Activated CD4-positive, alpha-beta memory T cell treated with anti-CD3 and anti-CD28 coated beads, Interleukin-2, amount 10 ng/mL, durations not matched to agents 7 days and 5 days (primary cell): ENCODE measurements at regions of chr1 and their contacts with region 1.

Region 1: DNA sequence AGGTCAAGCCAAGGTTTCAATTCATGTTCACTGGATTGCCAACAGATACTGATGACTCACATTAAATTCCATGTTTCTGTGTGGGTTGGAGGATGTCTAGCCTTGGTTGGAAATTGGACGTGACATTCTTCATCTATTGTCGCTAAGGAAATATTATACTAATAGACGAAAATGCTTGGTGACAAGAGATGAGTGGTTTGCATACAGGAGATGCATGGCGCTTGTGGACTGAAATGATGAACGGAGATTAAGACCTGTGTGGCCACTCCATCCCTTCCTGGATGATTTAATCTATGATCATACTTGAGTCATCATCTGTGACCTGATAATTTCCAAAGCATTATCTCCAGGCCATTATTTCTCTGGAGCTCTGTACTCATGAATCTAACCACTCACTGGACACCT is 97.0 kb upstream of the CD34 start:
- DNase-seq: no peak
- H3K4me3 Mint-ChIP-seq: no peak overlapping the region
- H3K27ac Mint-ChIP-seq: no peak overlapping the region
- H3K4me1 Mint-ChIP-seq: no peaks in the 10 kb centered on the region
- H3K27me3 Mint-ChIP-seq: peaks cover 4% of the 10 kb centered on the region

Region 2: DNA sequence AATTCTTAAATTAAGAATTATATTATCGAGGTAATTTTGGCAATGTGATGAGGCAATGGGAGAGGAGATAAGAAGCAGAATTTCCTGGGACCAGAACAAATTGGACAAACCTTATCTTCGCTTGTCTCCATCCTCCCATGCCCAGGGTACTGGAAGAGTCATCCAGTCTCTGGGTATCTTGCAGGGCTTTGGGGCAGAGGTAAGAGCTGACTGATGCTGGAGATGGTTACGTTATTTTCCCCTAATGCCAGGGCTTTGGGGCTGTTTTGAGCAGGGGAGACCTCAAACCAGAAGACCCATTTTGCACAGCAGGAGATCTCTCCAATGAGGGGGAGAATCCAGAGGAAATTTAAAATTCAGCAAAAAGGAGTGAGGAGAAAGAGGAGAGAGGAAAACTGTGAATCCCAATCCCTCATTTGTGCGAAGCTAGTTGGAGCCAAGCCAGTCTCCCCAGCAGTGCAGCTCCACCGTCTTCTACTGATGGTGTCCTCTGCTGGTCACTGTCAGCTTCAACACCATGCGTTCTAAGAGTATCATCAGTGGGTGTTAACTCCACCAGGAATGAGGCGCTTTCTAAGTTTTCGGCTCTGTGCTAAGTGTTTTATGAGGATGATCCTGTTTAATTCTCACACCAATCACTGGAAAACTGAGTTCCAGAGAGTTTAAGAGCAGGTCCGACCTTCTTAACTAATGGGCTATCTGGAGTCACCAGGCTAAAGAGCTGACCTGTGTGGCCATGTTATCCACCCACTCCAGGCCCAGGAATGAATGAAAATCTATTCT is 10.3 kb before region 1 on chr1:
- CTCF ChIA-PET with region 1: interaction called, 14 read pairs
- POLR2A ChIA-PET with region 1: no interaction called
- DNase-seq: peak; percentile 58
- H3K4me3 Mint-ChIP-seq: no peak overlapping the region
- H3K27ac Mint-ChIP-seq: no peak overlapping the region
- H3K4me1 Mint-ChIP-seq: no peaks in the 10 kb centered on the region
- H3K27me3 Mint-ChIP-seq: peaks cover 17% of the 10 kb centered on the region